ENCODE measurements at regions of chr6 and their contacts with region 1.

Region 1: GRCh38 chr6:8219352-8219943 is 117.1 kb upstream of the EEF1E1 start:
- DNase-seq: peak in 6 of 9 experiments; percentile 7 to 63 (median 36)
- ATAC-seq: peak; percentile 38
- H3K4me3 ChIP-seq: no peak overlapping the region
- H3K4me3 Mint-ChIP-seq: no peak overlapping the region
- H3K27ac ChIP-seq: no peak overlapping the region
- H3K27ac Mint-ChIP-seq: no peak overlapping the region
- H3K4me1 ChIP-seq: no peaks in the 10 kb centered on the region
- H3K4me1 Mint-ChIP-seq: no peaks in the 10 kb centered on the region
- H3K27me3 ChIP-seq: no peaks in the 10 kb centered on the region
- H3K27me3 Mint-ChIP-seq: peaks cover 8% of the 10 kb centered on the region
- CTCF ChIP-seq: peak; percentile 83

Region 2: GRCh38 chr6:7723041-7723447 is 496.4 kb before region 1 on chr6:
- CTCF ChIA-PET with region 1: interaction called, 3 read pairs
- POLR2A ChIA-PET with region 1: no interaction called
- intact Hi-C with region 1: loop called in 1 of 2 experiments (anchors 1 kb)
- DNase-seq: peak; percentile 13 to 61 (median 48)
- ATAC-seq: peak; percentile 36
- H3K4me3 ChIP-seq: no peak overlapping the region
- H3K4me3 Mint-ChIP-seq: no peak overlapping the region
- H3K27ac ChIP-seq: no peak overlapping the region
- H3K27ac Mint-ChIP-seq: no peak overlapping the region
- H3K4me1 ChIP-seq: peaks cover 4% of the 10 kb centered on the region
- H3K4me1 Mint-ChIP-seq: peaks cover 12% of the 10 kb centered on the region
- H3K27me3 ChIP-seq: peaks cover 8 to 15% of the 10 kb centered on the region in 2 experiments
- H3K27me3 Mint-ChIP-seq: peaks cover 55% of the 10 kb centered on the region
- CTCF ChIP-seq: peak; percentile 57

Region 3: GRCh38 chr6:7899101-7899888 is 320.2 kb before region 1 on chr6:
- CTCF ChIA-PET with region 1: interaction called, 14 read pairs
- POLR2A ChIA-PET with region 1: no interaction called
- intact Hi-C with region 1: loop called (anchors 2 to 5 kb)
- DNase-seq: peak in 2 of 9 experiments; percentile 10 to 25
- ATAC-seq: no peak
- H3K4me3 ChIP-seq: no peak overlapping the region
- H3K4me3 Mint-ChIP-seq: no peak overlapping the region
- H3K27ac ChIP-seq: no peak overlapping the region
- H3K27ac Mint-ChIP-seq: no peak overlapping the region
- H3K4me1 ChIP-seq: no peaks in the 10 kb centered on the region
- H3K4me1 Mint-ChIP-seq: no peaks in the 10 kb centered on the region
- H3K27me3 ChIP-seq: no peaks in the 10 kb centered on the region
- H3K27me3 Mint-ChIP-seq: no peaks in the 10 kb centered on the region
- CTCF ChIP-seq: no peak

Region 4: DNA sequence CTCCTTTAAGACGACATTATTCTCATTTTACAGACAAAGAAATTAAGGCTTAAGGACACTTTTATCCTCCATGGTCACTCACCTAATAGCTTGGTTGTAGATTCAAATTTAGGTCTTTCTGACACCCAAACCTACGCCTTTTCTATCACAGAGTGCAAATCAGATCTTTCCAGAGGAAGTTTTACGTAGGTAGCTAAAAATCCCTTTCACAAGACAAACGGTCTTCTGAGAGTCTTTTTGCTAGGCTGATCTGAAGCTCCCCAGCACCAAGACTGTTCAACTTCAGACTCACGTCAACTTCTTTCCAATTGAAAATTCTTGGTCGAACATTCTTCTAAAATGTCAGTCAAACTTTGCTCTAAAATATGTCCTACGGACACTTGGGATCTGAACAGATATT is 201.7 kb before region 1 on chr6:
- CTCF ChIA-PET with region 1: no interaction called
- POLR2A ChIA-PET with region 1: no interaction called
- intact Hi-C with region 1: no loop called
- DNase-seq: no peak
- ATAC-seq: no peak
- H3K4me3 ChIP-seq: no peak overlapping the region
- H3K4me3 Mint-ChIP-seq: peak overlapping the region; percentile 79
- H3K27ac ChIP-seq: no peak overlapping the region
- H3K27ac Mint-ChIP-seq: peak overlapping the region; percentile 94
- H3K4me1 ChIP-seq: no peaks in the 10 kb centered on the region
- H3K4me1 Mint-ChIP-seq: peaks cover 14% of the 10 kb centered on the region
- H3K27me3 ChIP-seq: no peaks in the 10 kb centered on the region
- H3K27me3 Mint-ChIP-seq: no peaks in the 10 kb centered on the region
- CTCF ChIP-seq: no peak

Region 5: GRCh38 chr6:8131256-8131897 is 88.1 kb before region 1 on chr6:
- CTCF ChIA-PET with region 1: interaction called, 60 read pairs
- POLR2A ChIA-PET with region 1: no interaction called
- intact Hi-C with region 1: loop called (anchors 1 kb)
- DNase-seq: peak in 8 of 9 experiments; percentile 1 to 56 (median 26)
- ATAC-seq: peak; percentile 55
- H3K4me3 ChIP-seq: no peak overlapping the region
- H3K4me3 Mint-ChIP-seq: no peak overlapping the region
- H3K27ac ChIP-seq: no peak overlapping the region
- H3K27ac Mint-ChIP-seq: no peak overlapping the region
- H3K4me1 ChIP-seq: no peaks in the 10 kb centered on the region
- H3K4me1 Mint-ChIP-seq: no peaks in the 10 kb centered on the region
- H3K27me3 ChIP-seq: peaks cover 0 to 4% of the 10 kb centered on the region in 2 experiments
- H3K27me3 Mint-ChIP-seq: peaks cover 19% of the 10 kb centered on the region
- CTCF ChIP-seq: peak; percentile 30

Region 6: GRCh38 chr6:8201679-8202078 is 17.8 kb before region 1 on chr6:
- CTCF ChIA-PET with region 1: interaction called, 11 read pairs
- POLR2A ChIA-PET with region 1: no interaction called
- intact Hi-C with region 1: no loop called
- DNase-seq: no peak
- ATAC-seq: no peak
- H3K4me3 ChIP-seq: no peak overlapping the region
- H3K4me3 Mint-ChIP-seq: no peak overlapping the region
- H3K27ac ChIP-seq: no peak overlapping the region
- H3K27ac Mint-ChIP-seq: no peak overlapping the region
- H3K4me1 ChIP-seq: no peaks in the 10 kb centered on the region
- H3K4me1 Mint-ChIP-seq: no peaks in the 10 kb centered on the region
- H3K27me3 ChIP-seq: peaks cover 0 to 3% of the 10 kb centered on the region in 2 experiments
- H3K27me3 Mint-ChIP-seq: peaks cover 19% of the 10 kb centered on the region
- CTCF ChIP-seq: no peak

Region 7: DNA sequence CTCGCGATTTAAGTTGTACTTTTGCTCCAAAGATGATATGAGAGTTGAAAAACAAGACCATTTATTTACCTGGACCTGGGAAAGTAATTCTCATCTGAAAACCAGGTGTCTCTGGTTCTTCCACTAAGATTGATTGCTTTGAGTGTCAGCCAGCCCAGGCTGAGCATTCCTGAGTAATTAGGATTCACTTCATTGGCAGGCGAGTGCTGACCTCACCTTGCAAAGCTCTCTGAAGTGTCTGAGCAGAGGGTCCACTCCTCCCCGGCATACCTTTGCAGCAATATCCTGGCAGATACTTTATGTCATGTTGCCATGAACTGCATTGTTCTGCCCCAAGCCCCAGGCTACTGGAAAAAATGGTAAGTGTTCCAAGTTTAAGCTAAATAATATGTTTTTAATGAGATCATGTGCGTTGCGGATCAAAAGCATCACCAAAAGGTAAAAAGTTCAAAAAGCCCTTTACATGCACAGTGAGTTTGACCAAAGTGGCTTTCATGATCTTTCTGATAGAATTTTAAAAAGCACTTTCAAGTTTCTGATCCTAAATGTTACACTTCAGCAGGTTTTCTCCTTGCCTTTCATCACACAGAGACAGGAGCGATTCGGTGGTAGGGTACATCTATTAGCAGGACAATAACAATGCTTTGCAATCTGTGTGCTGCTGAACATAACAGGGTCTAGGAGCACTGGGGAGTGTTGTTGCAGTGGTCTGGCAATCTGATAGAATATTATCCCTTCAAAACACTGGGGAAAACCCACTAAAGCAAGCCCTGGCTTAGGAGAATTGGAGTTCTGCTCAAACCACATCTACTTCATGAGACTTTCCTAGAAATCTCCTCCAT is 10.7 kb after region 1 on chr6:
- CTCF ChIA-PET with region 1: interaction called, 10 read pairs
- POLR2A ChIA-PET with region 1: no interaction called
- intact Hi-C with region 1: no loop called
- DNase-seq: no peak
- ATAC-seq: no peak
- H3K4me3 ChIP-seq: no peak overlapping the region
- H3K4me3 Mint-ChIP-seq: no peak overlapping the region
- H3K27ac ChIP-seq: no peak overlapping the region
- H3K27ac Mint-ChIP-seq: no peak overlapping the region
- H3K4me1 ChIP-seq: no peaks in the 10 kb centered on the region
- H3K4me1 Mint-ChIP-seq: no peaks in the 10 kb centered on the region
- H3K27me3 ChIP-seq: no peaks in the 10 kb centered on the region
- H3K27me3 Mint-ChIP-seq: peaks cover 12% of the 10 kb centered on the region
- CTCF ChIP-seq: no peak